ENCODE measurements at regions of chr2 and their contacts with region 1.

Region 1: DNA sequence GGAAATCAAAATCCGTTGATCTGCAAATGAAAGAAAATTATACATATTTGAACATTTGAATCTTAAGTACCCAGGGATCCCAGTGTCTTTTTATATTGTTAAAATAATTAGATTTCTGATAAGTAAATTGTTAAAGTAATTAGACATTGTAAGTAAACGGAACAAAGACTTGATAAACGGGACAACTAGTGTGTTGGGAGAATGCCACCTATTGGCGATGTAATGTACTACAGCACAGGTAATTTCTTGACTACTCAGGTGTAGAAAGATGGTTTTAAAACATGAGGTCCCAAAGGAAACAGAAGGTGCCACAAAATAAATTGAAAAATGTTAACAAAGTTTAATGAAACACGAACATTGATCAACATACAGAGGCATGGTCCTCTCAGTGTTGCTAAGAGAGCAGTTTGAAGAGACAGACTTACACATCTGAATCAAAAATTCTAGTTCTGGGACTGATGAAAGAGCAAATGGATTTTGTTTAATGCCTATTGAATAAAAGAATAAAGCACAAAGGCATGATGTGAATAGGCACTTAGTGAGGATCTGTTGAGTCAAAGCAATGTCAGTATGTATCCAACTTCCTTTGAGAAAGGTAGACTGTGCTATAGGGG is 103.4 kb upstream of the RASGRP3 start:
- DNase-seq: peak; percentile 63
- H3K4me3 ChIP-seq: no peak overlapping the region
- H3K27ac ChIP-seq: no peak overlapping the region
- H3K4me1 ChIP-seq: no peaks in the 10 kb centered on the region
- CTCF ChIP-seq: peak; percentile 96

Region 2: GRCh38 chr2:32553829-32554432 is 819.1 kb before region 1 on chr2:
- CTCF ChIA-PET with region 1: no interaction called
- POLR2A ChIA-PET with region 1: no interaction called
- intact Hi-C with region 1: loop called (anchors 10 kb)
- DNase-seq: peak; percentile 69
- H3K4me3 ChIP-seq: no peak overlapping the region
- H3K27ac ChIP-seq: no peak overlapping the region
- H3K4me1 ChIP-seq: peaks cover 5% of the 10 kb centered on the region
- CTCF ChIP-seq: peak; percentile 95

Region 3: DNA sequence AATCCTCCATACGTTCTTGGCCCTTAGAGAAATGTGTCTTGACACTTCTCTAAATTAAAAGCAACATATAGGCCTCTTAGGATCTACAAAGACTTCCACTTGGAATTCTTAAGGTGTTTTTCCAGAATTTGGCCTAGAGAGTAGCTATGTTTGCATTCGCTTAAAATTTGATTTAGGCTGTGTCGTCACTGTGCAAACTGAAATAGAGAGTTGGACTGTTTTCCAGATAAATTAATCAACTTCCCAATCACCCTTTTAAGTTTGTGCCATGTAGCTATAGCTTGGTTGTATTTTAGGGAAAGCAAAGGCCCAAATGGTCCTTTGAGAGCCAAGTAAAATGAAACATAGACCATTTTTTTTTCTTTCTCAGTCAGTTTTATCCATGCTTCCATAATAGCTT is 25.2 kb before region 1 on chr2:
- CTCF ChIA-PET with region 1: no interaction called
- POLR2A ChIA-PET with region 1: no interaction called
- intact Hi-C with region 1: no loop called
- DNase-seq: no peak
- H3K4me3 ChIP-seq: no peak overlapping the region
- H3K27ac ChIP-seq: no peak overlapping the region
- H3K4me1 ChIP-seq: no peaks in the 10 kb centered on the region
- CTCF ChIP-seq: no peak

Region 4: DNA sequence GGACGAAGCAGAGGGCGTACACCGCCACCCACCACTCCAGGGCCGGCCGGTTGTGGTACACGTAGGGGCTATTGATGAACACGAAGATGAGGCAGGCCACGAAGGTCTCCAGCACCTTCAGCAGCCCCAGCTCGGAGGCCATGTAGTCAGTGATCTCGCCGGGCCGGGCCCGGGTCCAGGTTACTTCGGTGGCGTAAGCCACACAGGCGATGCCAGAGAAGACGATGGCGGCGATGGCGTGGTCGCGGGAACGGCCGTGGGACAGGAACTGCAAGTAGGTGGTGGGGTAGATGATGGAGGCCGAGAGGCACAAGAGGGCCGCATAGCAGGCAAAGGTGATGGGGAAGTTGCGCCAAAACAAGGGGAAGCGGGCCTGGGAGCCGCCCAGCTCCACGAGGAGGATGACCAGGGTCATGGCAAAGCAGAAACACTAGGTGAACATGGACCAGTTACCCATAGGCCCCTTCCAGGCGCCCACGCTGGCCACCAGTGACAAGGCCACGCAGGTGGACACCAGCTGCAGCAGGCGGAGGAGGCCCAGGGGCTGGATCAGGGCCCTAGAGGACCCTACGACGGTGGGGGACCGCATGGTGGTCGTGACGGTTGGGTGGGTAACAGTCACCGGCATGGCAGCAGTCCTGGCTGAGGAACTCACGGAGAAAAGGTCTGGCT is 354.4 kb after region 1 on chr2:
- CTCF ChIA-PET with region 1: no interaction called
- POLR2A ChIA-PET with region 1: no interaction called
- intact Hi-C with region 1: no loop called
- DNase-seq: no peak
- H3K4me3 ChIP-seq: no peak overlapping the region
- H3K27ac ChIP-seq: no peak overlapping the region
- H3K4me1 ChIP-seq: no peaks in the 10 kb centered on the region
- CTCF ChIP-seq: no peak

Measured in OCI-LY7 (cell line).